ENCODE measurements at regions of chr15 and their contacts with region 1.

Region 1: GRCh38 chr15:72783563-72784237 is at the start of gene ADPGK:
- DNase-seq: peak; percentile 68 to 86
- ATAC-seq: peak; percentile 87
- H3K4me3 ChIP-seq: peak within 1 kb of the TSS; percentile 86 to 99 (median 94)
- H3K27ac ChIP-seq: peak within 1 kb of the TSS; percentile 94 to 96 (median 96)
- H3K4me1 ChIP-seq: peaks cover 20 to 35% of the 10 kb centered on the region in 2 donors
- H3K27me3 ChIP-seq: no peaks in the 10 kb centered on the region
- CTCF ChIP-seq: peak in 2 of 5 experiments; percentile 52 to 61
- POLR2A ChIP-seq: peak; percentile 84 to 94
- total RNA-seq, gene ADPGK: 13.4 to 23.2 (median 17.2) TPM

Region 2: DNA sequence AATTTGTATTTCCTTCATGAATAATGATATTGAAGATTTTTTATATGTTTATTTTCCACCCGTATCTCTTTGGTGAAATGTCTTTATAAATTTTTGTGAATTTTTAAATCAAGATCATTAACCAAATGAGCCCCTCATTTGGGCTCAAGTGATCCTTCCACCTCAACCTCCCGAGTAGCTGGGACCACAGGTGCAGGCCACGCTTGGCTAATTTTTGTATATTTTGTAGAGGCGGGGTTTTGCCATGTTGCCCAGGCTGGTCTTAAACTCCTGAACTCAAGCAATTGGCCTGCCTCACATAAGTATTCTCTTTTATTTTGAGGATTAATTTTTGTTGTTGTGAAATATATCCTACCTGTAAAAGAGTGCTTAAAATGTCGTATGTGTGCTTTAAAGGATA is 92.8 kb before region 1 on chr15:
- in situ Hi-C with region 1: no loop called
- intact Hi-C with region 1: no loop called
- DNase-seq: no peak
- ATAC-seq: no peak
- H3K4me3 ChIP-seq: no peak overlapping the region
- H3K27ac ChIP-seq: no peak overlapping the region
- H3K4me1 ChIP-seq: peaks cover 6 to 7% of the 10 kb centered on the region in 2 donors
- H3K27me3 ChIP-seq: no peaks in the 10 kb centered on the region
- CTCF ChIP-seq: no peak
- POLR2A ChIP-seq: no peak

Region 3: GRCh38 chr15:72758182-72758581 is 25.5 kb before region 1 on chr15:
- in situ Hi-C with region 1: no loop called
- intact Hi-C with region 1: no loop called
- DNase-seq: no peak
- ATAC-seq: no peak
- H3K4me3 ChIP-seq: no peak overlapping the region
- H3K27ac ChIP-seq: no peak overlapping the region
- H3K4me1 ChIP-seq: no peaks in the 10 kb centered on the region
- H3K27me3 ChIP-seq: no peaks in the 10 kb centered on the region
- CTCF ChIP-seq: no peak
- POLR2A ChIP-seq: no peak

Region 4: GRCh38 chr15:72835294-72835890 is 51.7 kb after region 1 on chr15:
- in situ Hi-C with region 1: no loop called
- intact Hi-C with region 1: loop called (anchors 5 kb)
- DNase-seq: peak in 1 of 2 donors; percentile 39
- ATAC-seq: peak in 1 of 2 donors; percentile 24
- H3K4me3 ChIP-seq: no peak overlapping the region
- H3K27ac ChIP-seq: peak overlapping the region; percentile 84 to 93 (median 89)
- H3K4me1 ChIP-seq: peaks cover 28 to 57% of the 10 kb centered on the region in 2 donors
- H3K27me3 ChIP-seq: no peaks in the 10 kb centered on the region
- CTCF ChIP-seq: peak in 4 of 5 experiments; percentile 23 to 50 (median 38)
- POLR2A ChIP-seq: no peak

Region 5: GRCh38 chr15:73051811-73052678 is 268.3 kb after region 1 on chr15 and contains the start of gene NEO1:
- in situ Hi-C with region 1: no loop called
- intact Hi-C with region 1: loop called (anchors 1 kb)
- DNase-seq: peak; percentile 81 to 89
- ATAC-seq: peak; percentile 72 to 77
- H3K4me3 ChIP-seq: peak within 1 kb of the TSS; percentile 93 to 99 (median 97)
- H3K27ac ChIP-seq: peak within 1 kb of the TSS; percentile 98 to 99 (median 98)
- H3K4me1 ChIP-seq: peaks cover 16 to 40% of the 10 kb centered on the region in 2 donors
- H3K27me3 ChIP-seq: no peaks in the 10 kb centered on the region
- CTCF ChIP-seq: no peak
- POLR2A ChIP-seq: peak; percentile 51 to 61
- total RNA-seq, gene NEO1: 13.8 to 32.0 (median 20.3) TPM

Region 6: DNA sequence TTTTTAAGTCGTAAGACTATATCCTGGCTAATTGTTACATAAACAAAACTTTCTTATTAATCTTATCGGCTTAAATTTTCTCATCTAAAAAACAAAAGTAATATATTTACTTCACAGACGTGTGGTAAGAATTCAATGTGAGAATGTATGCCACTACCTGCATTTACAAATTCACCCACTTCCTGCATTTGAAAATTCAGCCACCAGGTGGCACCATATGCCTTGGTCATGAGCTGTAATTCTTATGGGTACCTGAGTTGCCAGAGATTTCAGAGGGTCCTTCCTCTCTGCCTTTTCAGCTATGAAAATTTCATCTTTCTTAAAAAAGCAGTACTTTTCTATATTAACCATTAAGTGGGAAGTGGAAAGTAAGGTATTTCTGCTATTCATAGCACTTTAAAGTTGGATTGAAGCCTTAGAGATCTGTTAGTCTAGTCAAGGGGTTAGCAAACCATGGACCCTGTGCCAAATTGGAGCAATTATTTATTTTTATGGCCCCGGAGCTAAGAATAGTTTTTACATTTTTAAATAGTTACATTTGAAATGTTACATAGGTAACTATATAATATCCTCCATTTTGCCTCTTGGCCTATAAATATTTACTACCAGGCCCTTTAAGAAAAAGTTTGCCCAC is 457.3 kb after region 1 on chr15:
- in situ Hi-C with region 1: loop called in 1 of 4 experiments (anchors 25 kb)
- intact Hi-C with region 1: no loop called
- DNase-seq: peak; percentile 20 to 57
- ATAC-seq: peak in 1 of 2 donors; percentile 39
- H3K4me3 ChIP-seq: no peak overlapping the region
- H3K27ac ChIP-seq: no peak overlapping the region
- H3K4me1 ChIP-seq: no peaks in the 10 kb centered on the region
- H3K27me3 ChIP-seq: no peaks in the 10 kb centered on the region
- CTCF ChIP-seq: peak; percentile 64 to 89 (median 65)
- POLR2A ChIP-seq: no peak